ENCODE measurements at regions of chr1 and their contacts with region 1.

Region 1: GRCh38 chr1:210311726-210312493 is 16.8 kb upstream of the HHAT start:
- DNase-seq: no peak
- H3K4me3 ChIP-seq: peak overlapping the region; percentile 36 to 62 (median 44); a peak in 7 of 8 replicates
- H3K27ac ChIP-seq: no peak overlapping the region
- H3K4me1 ChIP-seq: peaks cover 0 to 4% (median 0%) of the 10 kb centered on the region in 4 experiments; a peak in 1 of 7 replicates
- H3K27me3 ChIP-seq: peaks cover 0 to 7% (median 4%) of the 10 kb centered on the region in 4 experiments; a peak in 6 of 7 replicates
- CTCF ChIP-seq: no peak
- EP300 ChIP-seq: no peak
- POLR2A ChIP-seq: no peak
- RAD21 ChIP-seq: no peak

Region 2: GRCh38 chr1:209860293-209860881 is 451.5 kb before region 1 on chr1:
- CTCF ChIA-PET with region 1: interaction called, 19 read pairs
- POLR2A ChIA-PET with region 1: no interaction called
- DNase-seq: peak in 1 of 2 experiments; percentile 82
- H3K4me3 ChIP-seq: no peak overlapping the region
- H3K27ac ChIP-seq: no peak overlapping the region
- H3K4me1 ChIP-seq: peaks cover 12 to 22% (median 17%) of the 10 kb centered on the region in 4 experiments
- H3K27me3 ChIP-seq: no peaks in the 10 kb centered on the region
- CTCF ChIP-seq: peak; percentile 65 to 88 (median 78)
- EP300 ChIP-seq: no peak
- POLR2A ChIP-seq: no peak
- RAD21 ChIP-seq: peak; percentile 86 to 90

Region 3: GRCh38 chr1:210222340-210223006 is 89.4 kb before region 1 on chr1:
- CTCF ChIA-PET with region 1: interaction called, 18 read pairs
- POLR2A ChIA-PET with region 1: no interaction called
- DNase-seq: no peak
- H3K4me3 ChIP-seq: no peak overlapping the region
- H3K27ac ChIP-seq: no peak overlapping the region
- H3K4me1 ChIP-seq: peaks cover 0 to 3% (median 0%) of the 10 kb centered on the region in 4 experiments; a peak in 1 of 7 replicates
- H3K27me3 ChIP-seq: no peaks in the 10 kb centered on the region; a peak in 1 of 7 replicates
- CTCF ChIP-seq: no peak
- EP300 ChIP-seq: no peak
- POLR2A ChIP-seq: no peak
- RAD21 ChIP-seq: no peak

Region 4: DNA sequence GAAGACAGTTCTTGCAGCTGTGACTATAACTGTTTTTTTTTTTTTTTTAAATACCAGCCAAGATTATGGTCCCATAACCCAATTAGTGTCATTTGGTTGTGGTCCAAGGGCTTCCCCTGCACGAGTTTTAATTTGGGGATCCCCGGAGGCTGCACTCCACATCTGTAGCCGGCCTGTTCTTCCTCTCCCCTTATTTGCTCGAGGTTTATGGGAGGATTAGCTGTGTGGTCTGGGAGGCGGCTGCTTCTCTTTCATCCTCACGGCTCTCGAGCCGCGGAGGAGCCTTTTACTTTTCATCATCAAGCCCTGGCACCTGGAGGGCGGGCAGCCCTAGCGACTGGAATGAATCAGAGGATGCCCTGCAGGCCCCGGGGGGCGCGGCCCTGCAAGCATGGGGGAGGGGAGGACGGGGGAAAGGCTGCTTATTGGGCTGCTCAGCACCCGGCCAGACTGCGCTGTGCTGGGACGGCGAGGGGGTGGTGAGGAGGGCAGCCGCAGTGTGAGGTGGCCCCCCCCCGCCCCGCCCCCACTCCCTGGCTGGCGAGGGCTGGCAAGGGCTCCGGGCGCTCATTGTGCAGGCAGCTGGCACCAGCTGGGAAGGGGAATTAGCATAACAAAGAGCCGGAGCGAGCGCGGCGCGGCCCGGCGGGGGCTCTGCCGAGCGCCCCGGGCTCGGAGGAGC is 60.8 kb before region 1 on chr1:
- CTCF ChIA-PET with region 1: interaction called, 13 read pairs
- POLR2A ChIA-PET with region 1: interaction called, 5 read pairs
- DNase-seq: peak; percentile 83 to 86
- H3K4me3 ChIP-seq: peak overlapping the region; percentile 62 to 67 (median 66)
- H3K27ac ChIP-seq: no peak overlapping the region
- H3K4me1 ChIP-seq: peaks cover 0 to 17% (median 11%) of the 10 kb centered on the region in 4 experiments; a peak in 5 of 7 replicates
- H3K27me3 ChIP-seq: peaks cover 0 to 22% (median 17%) of the 10 kb centered on the region in 4 experiments; a peak in 6 of 7 replicates
- CTCF ChIP-seq: no peak
- EP300 ChIP-seq: 0 out of 3 replicates have a peak, but pooled peaks of 1 of the 2 experiments have one; percentile 26
- POLR2A ChIP-seq: no peak; a peak in 1 of 3 replicates
- RAD21 ChIP-seq: no peak

Region 5: DNA sequence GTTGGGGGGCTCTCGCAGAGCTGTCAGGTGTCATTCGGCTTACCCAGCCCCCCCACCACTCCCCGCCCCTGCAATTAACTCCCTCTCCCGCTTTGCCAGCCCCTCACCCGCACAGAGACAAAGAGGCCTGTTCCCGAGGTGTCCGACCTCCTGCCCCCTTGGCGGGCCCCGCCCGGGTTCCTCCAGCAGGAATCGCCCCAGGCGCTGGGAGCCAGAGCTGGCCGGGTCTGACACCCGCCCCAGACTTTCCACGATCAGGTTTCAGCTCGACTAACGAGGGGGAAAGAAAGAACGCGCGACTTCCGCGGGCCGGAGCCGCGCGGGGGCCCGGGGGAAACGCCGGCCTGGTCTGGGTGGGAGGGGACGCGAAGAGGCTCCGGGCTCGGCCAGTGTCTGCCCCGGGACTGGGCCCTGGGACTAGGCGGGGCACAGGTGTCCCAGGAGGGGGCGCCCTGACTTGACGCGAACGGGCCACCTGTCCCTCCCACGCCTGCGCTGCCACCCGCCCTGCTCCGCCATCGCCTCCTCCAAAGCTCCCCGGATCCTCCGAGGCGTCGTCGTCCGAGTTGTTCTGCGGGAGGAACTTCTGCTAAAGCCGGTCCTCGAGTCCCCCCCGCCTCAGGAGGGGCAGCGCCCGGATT is 19.6 kb before region 1 on chr1:
- CTCF ChIA-PET with region 1: interaction called, 16 read pairs
- POLR2A ChIA-PET with region 1: interaction called, 3 read pairs
- DNase-seq: peak in 1 of 2 experiments; percentile 89
- H3K4me3 ChIP-seq: peak overlapping the region; percentile 42 to 68 (median 50)
- H3K27ac ChIP-seq: no peak overlapping the region
- H3K4me1 ChIP-seq: peaks cover 0 to 13% (median 6%) of the 10 kb centered on the region in 4 experiments; a peak in 5 of 7 replicates
- H3K27me3 ChIP-seq: peaks cover 0 to 13% (median 9%) of the 10 kb centered on the region in 4 experiments; a peak in 4 of 7 replicates
- CTCF ChIP-seq: peak; percentile 37 to 75 (median 55)
- EP300 ChIP-seq: no peak
- POLR2A ChIP-seq: no peak
- RAD21 ChIP-seq: peak in 1 of 2 experiments; percentile 47; a peak in 2 of 4 replicates

Region 6: DNA sequence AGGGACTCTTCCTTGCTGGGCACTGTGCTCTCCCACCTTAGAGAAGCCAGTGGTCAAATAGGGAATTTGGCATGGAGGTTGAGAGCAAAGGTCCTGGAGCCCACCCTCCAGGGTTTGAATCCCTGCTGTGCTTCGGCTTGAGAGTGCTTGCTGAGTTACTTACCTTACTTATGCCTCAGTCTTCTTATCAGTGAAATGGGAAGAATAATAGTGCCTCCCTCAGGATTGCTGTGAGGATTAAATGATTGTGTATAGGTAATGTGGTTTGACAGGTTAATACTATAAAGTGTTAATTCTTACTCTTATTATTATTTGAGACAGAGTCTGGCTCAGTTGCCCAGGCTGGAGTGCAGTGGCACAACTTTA is 96.0 kb after region 1 on chr1:
- CTCF ChIA-PET with region 1: no interaction called
- POLR2A ChIA-PET with region 1: no interaction called
- DNase-seq: no peak
- H3K4me3 ChIP-seq: no peak overlapping the region
- H3K27ac ChIP-seq: no peak overlapping the region
- H3K4me1 ChIP-seq: peaks cover 0 to 6% (median 2%) of the 10 kb centered on the region in 4 experiments; a peak in 3 of 7 replicates
- H3K27me3 ChIP-seq: no peaks in the 10 kb centered on the region
- CTCF ChIP-seq: no peak
- EP300 ChIP-seq: no peak
- POLR2A ChIP-seq: no peak
- RAD21 ChIP-seq: no peak

Measured in H1 (cell line).